ENCODE measurements at regions of chr21 and their contacts with region 1.

Region 1: DNA sequence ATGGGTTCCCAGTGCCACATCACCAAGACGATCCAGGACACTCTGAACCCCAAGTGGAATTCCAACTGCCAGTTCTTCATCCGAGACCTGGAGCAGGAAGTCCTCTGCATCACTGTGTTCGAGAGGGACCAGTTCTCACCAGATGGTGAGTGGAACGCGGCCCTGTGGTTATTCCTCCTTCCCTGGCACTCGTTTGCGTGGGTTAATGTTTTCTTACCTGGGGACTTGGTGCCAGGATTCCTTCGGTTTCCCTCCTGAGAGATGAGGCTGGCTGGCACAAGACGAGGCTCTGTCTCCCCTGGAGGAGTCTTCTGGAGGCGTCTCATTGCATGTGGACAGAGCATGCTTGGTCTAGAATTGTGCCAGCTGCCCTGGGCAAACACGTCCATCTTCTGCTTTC is 29.3 kb downstream of the ATP5PO start:
- DNase-seq: peak in 1 of 2 donors; percentile 78
- H3K4me3 ChIP-seq: no peak overlapping the region
- H3K27ac ChIP-seq: no peak overlapping the region
- H3K4me1 ChIP-seq: peaks cover 0 to 4% of the 10 kb centered on the region in 2 donors
- H3K27me3 ChIP-seq: no peaks in the 10 kb centered on the region
- CTCF ChIP-seq: no peak
- POLR2A ChIP-seq: no peak

Region 2: DNA sequence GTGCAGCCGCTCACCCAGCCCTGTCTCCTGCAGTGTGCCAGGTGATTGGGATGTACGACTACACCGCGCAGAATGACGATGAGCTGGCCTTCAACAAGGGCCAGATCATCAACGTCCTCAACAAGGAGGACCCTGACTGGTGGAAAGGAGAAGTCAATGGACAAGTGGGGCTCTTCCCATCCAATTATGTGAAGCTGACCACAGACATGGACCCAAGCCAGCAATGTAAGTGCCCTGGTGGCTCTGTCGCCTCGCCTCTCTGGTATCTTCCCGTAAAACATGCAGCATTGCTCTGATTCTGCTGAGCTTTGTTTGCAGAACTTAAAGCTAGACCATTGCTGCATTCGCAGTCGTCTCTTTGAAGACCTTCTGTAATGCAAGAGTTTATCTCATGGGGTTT is 49.9 kb before region 1 on chr21:
- intact Hi-C with region 1: no loop called
- DNase-seq: no peak
- H3K4me3 ChIP-seq: no peak overlapping the region
- H3K27ac ChIP-seq: no peak overlapping the region
- H3K4me1 ChIP-seq: no peaks in the 10 kb centered on the region
- H3K27me3 ChIP-seq: no peaks in the 10 kb centered on the region
- CTCF ChIP-seq: no peak
- POLR2A ChIP-seq: no peak

Region 3: DNA sequence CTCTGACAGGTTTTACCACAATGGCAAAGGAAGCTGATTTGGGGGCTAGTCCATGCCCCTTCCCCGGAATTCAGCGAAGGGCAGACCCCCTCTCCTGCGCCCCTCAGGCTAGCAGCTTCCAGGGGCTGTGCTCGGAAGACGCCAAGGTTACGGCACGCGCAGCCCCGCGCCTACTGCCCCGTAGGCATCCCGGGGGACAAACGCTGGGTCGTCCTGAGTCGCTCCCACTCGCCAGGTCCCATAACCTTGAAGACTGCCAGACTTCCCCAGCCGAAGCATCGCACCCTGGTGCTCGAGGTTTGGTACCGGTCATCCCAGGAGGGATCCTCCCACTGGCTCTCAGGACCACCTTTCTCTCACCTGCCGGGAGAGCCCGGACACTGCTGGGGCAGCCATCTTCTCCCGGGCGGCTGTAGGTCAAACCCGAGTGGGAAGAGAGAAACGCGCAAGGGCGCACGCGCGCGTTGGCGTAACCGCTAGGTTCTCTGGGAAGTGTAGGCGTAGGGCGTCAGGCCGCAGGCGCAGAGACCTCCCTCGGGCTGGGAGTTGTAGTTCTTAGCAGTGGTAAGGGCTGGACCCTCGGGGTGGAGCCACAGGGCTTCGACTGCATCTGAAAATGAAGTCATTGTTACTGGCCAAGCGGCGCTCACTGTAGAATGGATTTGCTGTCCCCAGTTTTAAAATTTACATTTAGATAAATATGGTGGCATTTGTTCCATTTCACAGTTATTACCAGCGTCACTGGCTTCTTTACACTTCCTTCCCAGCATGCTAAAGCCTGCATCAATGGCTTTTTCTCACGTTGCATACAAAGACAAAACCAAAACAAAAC is 29.3 kb after region 1 on chr21 and contains the start of gene ATP5PO:
- intact Hi-C with region 1: loop called (anchors 2 kb)
- DNase-seq: peak; percentile 95 to 96
- H3K4me3 ChIP-seq: peak within 1 kb of the TSS; percentile 68 to 94 (median 74)
- H3K27ac ChIP-seq: peak within 1 kb of the TSS; percentile 88 to 91
- H3K4me1 ChIP-seq: peaks cover 0 to 11% of the 10 kb centered on the region in 2 donors
- H3K27me3 ChIP-seq: no peaks in the 10 kb centered on the region
- CTCF ChIP-seq: peak in 1 of 3 donors; percentile 30
- POLR2A ChIP-seq: peak; percentile 65
- total RNA-seq, gene ATP5PO: 161 to 234 (median 170) TPM

Measured in breast epithelium (tissue), 4 donors.